ENCODE measurements at regions of chr7 and their contacts with region 1.

Region 1: DNA sequence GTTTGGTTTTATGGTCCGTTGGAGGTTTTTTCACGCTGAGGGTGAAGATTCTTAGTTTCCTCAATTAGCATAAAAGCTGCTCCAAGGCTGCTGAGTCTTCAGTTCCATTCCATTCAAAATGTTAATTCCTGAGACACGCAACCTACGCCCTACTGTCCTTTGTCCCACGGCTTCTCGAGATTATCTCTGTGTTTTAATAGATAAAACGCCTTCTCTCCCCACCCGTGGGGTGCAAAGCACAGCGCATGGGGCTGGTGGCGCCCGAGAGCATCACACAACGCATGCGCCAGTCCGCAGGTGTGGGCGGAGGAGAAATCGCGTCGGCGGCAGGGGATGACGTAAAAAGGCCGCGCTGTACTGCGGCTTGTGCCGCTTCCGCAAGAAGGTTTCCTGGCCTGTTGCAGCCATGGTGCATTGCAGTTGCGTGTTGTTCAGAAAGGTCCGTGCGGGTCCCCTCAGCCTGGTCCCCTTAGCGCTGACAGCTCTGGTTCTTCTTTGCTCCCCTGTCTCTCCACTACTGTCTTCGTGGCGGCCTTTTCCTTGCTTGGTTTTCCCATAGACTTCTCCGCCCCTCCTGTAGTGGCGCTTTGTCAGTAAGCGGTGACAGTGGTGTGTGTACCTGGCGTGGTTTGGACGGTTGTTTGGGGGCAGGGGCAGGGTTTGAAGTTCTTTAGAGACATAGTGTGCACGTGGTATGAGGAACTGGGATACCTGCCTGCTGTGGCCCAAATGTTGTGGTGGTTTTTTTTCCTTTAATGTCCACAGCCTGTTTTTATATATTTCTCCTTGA is at the start of gene GTPBP10:
- DNase-seq: peak; percentile 93 to 97
- ATAC-seq: peak; percentile 100
- H3K4me3 ChIP-seq: peak within 1 kb of the TSS; percentile 83
- H3K27ac ChIP-seq: peak within 1 kb of the TSS; percentile 93
- H3K4me1 ChIP-seq: peaks cover 11% of the 10 kb centered on the region
- H3K27me3 ChIP-seq: no peaks in the 10 kb centered on the region
- CTCF ChIP-seq: peak; percentile 77
- total RNA-seq, gene GTPBP10: 18.9 to 28.5 (median 20.5) TPM

Region 2: GRCh38 chr7:90403174-90404113 is 56.9 kb after region 1 on chr7 and contains the start of gene CLDN12:
- intact Hi-C with region 1: loop called (anchors 1 to 5 kb)
- DNase-seq: peak; percentile 85 to 91
- ATAC-seq: peak; percentile 93 to 97 (median 96)
- H3K4me3 ChIP-seq: peak within 1 kb of the TSS; percentile 80
- H3K27ac ChIP-seq: peak within 1 kb of the TSS; percentile 98
- H3K4me1 ChIP-seq: peaks cover 25% of the 10 kb centered on the region
- H3K27me3 ChIP-seq: no peaks in the 10 kb centered on the region
- CTCF ChIP-seq: no peak
- total RNA-seq, gene CLDN12: 18.0 to 42.2 (median 26.3) TPM

Region 3: DNA sequence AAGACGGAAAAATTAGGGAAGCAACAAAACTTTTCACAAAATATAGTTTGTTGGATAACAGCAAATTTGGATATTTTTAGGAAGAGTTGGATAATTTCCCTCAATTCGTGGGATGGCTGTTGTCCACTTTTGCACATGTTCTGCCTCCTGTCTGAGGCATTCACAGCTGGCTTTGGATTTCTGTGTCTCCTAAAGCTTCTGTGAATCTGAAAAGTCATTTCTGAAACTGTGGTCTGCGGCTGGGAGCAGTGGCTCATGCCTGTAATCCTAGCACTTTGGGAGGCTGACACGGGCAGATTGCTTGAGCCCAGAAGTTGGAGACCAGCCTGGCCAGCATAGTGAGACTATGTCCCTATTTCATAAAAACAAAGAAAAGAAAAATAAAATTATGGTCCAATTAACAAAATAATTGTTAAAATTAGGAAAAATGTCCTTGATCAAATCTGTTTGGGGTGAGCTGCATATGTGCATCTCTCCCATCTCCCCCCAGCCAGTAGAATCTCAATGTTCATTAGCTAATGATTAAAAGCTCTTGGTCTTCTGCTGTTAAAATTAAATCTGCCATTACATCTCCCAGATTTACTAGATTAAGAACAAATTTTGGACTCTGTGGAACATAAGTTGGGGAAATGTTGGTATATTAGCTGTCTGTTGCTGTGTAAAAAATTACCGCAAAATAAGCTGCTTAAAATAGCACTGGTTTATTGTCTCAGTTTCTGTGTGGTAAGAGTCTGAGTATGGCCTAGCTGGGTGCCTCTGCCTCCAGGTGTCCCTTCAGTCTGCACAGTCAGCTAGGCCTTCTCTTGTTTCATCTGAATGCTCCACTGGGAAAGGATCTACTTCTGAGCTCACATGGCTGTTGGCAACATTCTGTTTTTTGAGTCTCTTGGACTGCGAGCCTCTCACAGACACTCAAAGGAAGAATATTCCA is 585.7 kb after region 1 on chr7:
- intact Hi-C with region 1: loop called in 1 of 2 experiments (anchors 10 kb)
- DNase-seq: no peak
- ATAC-seq: peak; percentile 91 to 93 (median 92)
- H3K4me3 ChIP-seq: no peak overlapping the region
- H3K27ac ChIP-seq: peak overlapping the region; percentile 77
- H3K4me1 ChIP-seq: peaks cover 18% of the 10 kb centered on the region
- H3K27me3 ChIP-seq: no peaks in the 10 kb centered on the region
- CTCF ChIP-seq: no peak

Measured in psoas muscle (tissue), 8 donors.